HepG2 (cell line): ENCODE measurements at regions of chr1 and their contacts with region 1.

Region 1: DNA sequence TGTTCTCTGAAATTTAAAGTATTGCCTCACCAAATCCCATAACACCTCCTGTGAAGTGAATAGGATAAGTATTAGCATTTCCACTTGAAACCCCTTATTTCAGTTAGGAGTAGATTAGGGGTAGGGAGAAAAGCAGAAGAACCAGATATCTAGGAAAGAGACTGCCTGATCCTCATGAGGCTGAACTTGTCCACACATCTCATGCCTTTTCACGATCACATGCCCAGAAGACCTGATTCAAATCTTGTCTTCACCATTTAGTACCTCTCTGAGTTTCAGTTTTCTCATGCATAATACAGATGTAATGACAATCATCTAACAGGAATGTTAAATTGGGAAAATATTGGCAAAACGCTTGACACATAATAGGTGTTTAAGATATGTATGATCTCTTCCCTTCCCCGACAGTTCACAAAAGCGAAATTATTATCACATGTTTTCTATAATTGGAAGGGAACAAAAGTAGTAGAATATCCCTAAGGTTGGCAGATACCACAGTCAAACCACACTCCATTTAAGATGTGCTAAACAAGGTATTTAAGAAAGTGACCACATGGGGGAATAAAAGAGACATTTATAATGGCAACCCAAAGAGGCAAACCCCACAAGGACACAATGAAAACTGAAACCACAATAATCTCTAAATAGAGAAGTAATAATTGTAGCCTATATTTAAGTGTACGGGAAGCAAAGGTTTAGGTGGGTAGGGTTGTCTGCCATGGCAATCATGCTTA is 25.2 kb downstream of the GFI1 start:
- DNase-seq: peak; percentile 15
- ATAC-seq: peak; percentile 69
- H3K4me3 ChIP-seq: no peak overlapping the region
- H3K27ac ChIP-seq: no peak overlapping the region
- H3K4me1 ChIP-seq: 0 out of 2 replicates have a peak, but pooled peaks cover 4% of the 10 kb centered on the region
- H3K27me3 ChIP-seq: no peaks in the 10 kb centered on the region; a peak in 1 of 5 replicates
- CTCF ChIP-seq: 0 out of 2 replicates have a peak, but pooled peaks have one; percentile 22
- EP300 ChIP-seq: no peak
- POLR2A ChIP-seq: no peak
- RAD21 ChIP-seq: no peak

Region 2: GRCh38 chr1:92447033-92447681 is 14.4 kb before region 1 on chr1:
- CTCF ChIA-PET with region 1: no interaction called
- POLR2A ChIA-PET with region 1: no interaction called
- in situ Hi-C with region 1: no loop called
- intact Hi-C with region 1: no loop called
- DNase-seq: no peak
- ATAC-seq: no peak
- H3K4me3 ChIP-seq: no peak overlapping the region
- H3K27ac ChIP-seq: no peak overlapping the region
- H3K4me1 ChIP-seq: peaks cover 25% of the 10 kb centered on the region
- H3K27me3 ChIP-seq: peaks cover 0 to 4% of the 10 kb centered on the region in 2 experiments; a peak in 1 of 5 replicates
- CTCF ChIP-seq: no peak
- EP300 ChIP-seq: no peak
- POLR2A ChIP-seq: no peak
- RAD21 ChIP-seq: no peak

Region 3: DNA sequence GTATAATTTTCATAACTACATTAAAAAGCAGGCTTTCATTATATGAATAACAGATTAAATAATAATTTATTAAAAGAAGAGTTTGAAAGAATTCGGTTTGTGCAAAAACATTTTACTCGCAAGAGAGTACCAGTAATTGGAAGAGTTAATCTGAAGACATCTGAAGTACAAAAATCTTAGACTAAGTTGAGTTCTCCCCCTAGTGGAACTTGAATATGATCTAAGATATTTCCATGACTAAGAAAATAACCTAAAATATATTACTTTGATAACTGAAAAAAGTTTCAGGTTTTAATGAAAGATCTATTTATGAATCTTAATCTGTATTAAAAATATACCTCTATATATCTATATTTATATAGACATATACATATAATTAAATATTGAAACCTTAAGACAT is 137.7 kb after region 1 on chr1:
- CTCF ChIA-PET with region 1: no interaction called
- POLR2A ChIA-PET with region 1: no interaction called
- in situ Hi-C with region 1: no loop called
- intact Hi-C with region 1: loop called (anchors 1 kb)
- DNase-seq: peak; percentile 41
- ATAC-seq: no peak
- H3K4me3 ChIP-seq: no peak overlapping the region
- H3K27ac ChIP-seq: no peak overlapping the region
- H3K4me1 ChIP-seq: no peaks in the 10 kb centered on the region
- H3K27me3 ChIP-seq: no peaks in the 10 kb centered on the region
- CTCF ChIP-seq: peak; percentile 29; the same call in 1 of the 2 replicates
- EP300 ChIP-seq: no peak
- POLR2A ChIP-seq: no peak
- RAD21 ChIP-seq: no peak